Activated CD4-positive, alpha-beta T cell treated with anti-CD3 and anti-CD28 coated beads for 36 hours (primary cell): ENCODE measurements at regions of chr2 and their contacts with region 1.

Region 1: DNA sequence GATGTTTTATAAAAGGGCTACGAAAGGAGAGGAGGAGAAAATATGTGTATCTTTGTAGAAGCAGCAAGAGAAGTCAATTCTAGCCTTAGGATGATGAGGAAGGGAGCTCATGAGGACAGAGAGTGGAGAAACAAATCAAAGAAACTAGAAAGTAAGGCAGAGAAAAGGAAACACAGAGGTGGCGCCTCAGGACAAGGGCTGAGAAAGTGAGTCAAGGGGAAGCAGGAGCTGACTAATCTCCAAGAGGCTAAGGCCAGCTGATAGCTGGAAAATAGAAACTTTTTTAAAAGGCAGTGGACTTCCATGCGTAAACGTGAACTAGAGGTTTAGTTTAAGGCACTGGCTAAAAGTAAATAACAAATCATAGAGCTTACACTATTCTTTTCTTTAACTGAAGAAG is 173.3 kb downstream of the ANKRD44 start:
- DNase-seq: peak; percentile 46
- ATAC-seq: peak; percentile 62
- H3K4me3 Mint-ChIP-seq: no peak overlapping the region
- H3K27ac Mint-ChIP-seq: peak overlapping the region; percentile 76
- H3K4me1 Mint-ChIP-seq: peaks cover 87% of the 10 kb centered on the region
- H3K27me3 Mint-ChIP-seq: no peaks in the 10 kb centered on the region

Region 2: DNA sequence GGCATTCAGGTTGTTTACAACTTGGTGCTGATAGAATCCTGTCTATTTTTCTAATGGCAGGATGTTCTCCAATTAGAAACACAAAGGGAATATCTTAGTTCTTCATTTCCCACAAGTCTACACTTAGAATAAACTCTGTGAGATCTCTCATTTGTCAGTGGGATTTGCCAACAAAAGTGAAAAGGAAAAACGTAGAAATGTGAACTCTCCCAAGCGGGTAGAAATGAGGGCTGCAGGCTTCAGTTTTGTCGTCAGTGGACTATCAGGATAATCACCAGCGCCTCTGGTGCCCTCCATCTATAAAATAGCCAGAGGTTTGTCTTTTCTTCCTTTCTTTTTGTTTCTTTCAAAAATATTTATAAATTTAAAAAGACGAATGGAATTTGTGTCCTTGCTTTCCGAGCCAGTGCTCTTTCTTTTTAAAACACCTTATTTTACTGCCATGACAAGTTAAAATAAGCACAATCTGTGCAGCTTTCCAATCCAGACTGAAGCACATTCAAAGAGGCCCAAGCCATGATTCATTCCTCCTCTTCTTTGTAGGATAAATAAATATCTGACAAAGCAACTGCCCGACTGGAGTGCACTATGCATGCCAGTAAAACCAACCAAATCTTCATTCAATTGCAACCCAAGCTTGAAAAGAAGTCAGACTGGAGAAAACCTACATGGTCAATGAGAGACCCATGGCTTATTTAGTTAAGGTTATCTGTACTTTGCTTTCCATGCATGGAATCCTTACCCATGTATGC is 12.4 kb before region 1 on chr2:
- CTCF ChIA-PET with region 1: interaction called, 16 read pairs
- POLR2A ChIA-PET with region 1: no interaction called
- intact Hi-C with region 1: no loop called
- DNase-seq: no peak
- ATAC-seq: no peak
- H3K4me3 Mint-ChIP-seq: no peak overlapping the region
- H3K27ac Mint-ChIP-seq: no peak overlapping the region
- H3K4me1 Mint-ChIP-seq: peaks cover 53% of the 10 kb centered on the region
- H3K27me3 Mint-ChIP-seq: no peaks in the 10 kb centered on the region

Region 3: DNA sequence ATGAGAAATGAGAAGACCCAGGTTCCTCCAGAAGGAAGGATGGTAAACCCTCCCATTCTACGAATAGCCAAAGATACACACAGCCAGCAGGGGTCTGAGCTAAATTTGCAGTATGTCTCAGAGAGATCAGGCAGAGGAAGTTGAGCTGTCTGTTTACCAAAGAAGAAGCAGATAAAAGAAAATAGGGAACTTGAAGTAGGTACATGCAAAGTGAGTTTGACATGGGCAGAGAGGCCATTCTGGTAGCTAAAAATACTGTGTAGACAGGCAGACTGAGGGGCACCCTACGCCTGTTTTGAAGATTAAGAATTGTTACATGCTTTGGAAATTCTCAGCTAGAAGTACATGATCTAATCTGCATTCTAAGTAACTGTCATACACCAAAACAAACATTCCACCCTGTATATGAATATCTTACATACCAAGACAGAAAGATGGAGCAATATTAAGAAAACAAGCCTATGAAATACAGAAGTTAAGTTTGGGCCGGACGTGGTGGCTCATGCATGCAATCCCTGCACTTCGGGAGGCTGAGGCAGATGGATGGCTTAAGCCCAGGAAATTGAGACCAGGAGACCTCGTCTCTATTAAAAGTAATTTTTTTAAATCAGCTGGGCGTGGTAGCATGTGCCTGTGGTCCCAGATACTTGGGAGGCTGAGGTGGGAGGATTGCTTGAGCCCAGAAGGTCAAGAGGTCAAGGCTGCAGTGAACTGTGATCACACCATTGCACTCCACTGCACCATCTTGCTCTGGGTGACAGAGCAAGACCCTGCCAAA is 15.4 kb after region 1 on chr2:
- CTCF ChIA-PET with region 1: interaction called, 17 read pairs
- POLR2A ChIA-PET with region 1: interaction called, 6 read pairs
- intact Hi-C with region 1: no loop called
- DNase-seq: no peak
- ATAC-seq: peak; percentile 63
- H3K4me3 Mint-ChIP-seq: peak overlapping the region; percentile 28
- H3K27ac Mint-ChIP-seq: peak overlapping the region; percentile 89
- H3K4me1 Mint-ChIP-seq: peaks cover 81% of the 10 kb centered on the region
- H3K27me3 Mint-ChIP-seq: no peaks in the 10 kb centered on the region